Right ventricle myocardium inferior (tissue), 1 donor: ENCODE measurements at regions of chr19 and their contacts with region 1.

Region 1: GRCh38 chr19:43983912-43984686 is at the start of gene ZNF155:
- DNase-seq: peak; percentile 93
- ATAC-seq: peak; percentile 100
- total RNA-seq, gene ZNF155: 7.6 TPM

Region 2: DNA sequence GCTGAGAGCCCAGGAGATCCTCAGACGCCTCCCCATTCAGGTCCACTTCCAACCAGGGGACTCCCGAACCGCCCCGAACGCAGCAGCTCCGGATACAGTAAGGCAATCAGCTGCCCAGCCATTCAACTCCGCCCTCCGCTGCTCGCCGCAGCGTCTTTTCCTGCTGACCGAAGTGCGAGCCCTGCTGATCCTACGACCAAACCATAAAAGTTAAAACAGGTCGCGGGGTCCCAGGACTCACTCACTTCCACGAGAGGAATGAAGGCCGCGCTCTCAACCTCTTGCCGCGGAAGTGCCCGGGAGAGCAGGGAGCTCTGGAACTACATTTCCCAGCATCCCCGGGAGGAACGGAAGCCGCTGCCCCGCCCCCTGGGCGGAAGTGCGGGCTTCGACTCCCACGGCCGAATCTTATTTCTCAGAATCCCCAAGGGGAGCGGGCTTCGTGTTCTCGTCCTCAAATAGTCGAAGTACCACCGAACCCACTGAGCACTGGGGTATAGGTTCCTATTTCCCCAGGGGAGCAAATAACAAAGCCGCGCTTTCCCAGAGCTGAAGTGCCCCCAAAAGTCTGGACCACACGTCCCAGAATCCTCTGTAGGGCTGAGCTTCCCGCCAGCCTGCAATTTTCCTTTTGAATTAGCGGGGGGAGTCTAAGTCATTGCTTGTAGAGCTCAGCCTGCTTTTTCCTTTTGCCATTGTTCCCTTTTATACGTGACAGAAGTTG is 49.0 kb before region 1 on chr19 and contains the start of gene ZNF45:
- intact Hi-C with region 1: loop called (anchors 5 kb)
- DNase-seq: peak; percentile 94
- ATAC-seq: peak; percentile 98
- total RNA-seq, gene ZNF45: 7.8 TPM

Region 3: GRCh38 chr19:44002566-44003460 is 18.7 kb after region 1 on chr19 and contains the start of gene ZNF230:
- intact Hi-C with region 1: loop called (anchors 1 kb)
- DNase-seq: peak; percentile 91
- ATAC-seq: peak; percentile 99
- total RNA-seq, gene ZNF230: 2.1 TPM